Activated T-helper 2 cell treated with anti-CD3 and anti-CD28 coated beads, Interferon-gamma antibody, Interleukin-2, Interleukin-4, amounts not matched to agents 10 μg/mL and 5 μg/mL and 100 μg/mL, durations not matched to agents 14 hours and 24 hours and 36 hours (primary cell): ENCODE measurements at regions of chr12 and their contacts with region 1.

Region 1: DNA sequence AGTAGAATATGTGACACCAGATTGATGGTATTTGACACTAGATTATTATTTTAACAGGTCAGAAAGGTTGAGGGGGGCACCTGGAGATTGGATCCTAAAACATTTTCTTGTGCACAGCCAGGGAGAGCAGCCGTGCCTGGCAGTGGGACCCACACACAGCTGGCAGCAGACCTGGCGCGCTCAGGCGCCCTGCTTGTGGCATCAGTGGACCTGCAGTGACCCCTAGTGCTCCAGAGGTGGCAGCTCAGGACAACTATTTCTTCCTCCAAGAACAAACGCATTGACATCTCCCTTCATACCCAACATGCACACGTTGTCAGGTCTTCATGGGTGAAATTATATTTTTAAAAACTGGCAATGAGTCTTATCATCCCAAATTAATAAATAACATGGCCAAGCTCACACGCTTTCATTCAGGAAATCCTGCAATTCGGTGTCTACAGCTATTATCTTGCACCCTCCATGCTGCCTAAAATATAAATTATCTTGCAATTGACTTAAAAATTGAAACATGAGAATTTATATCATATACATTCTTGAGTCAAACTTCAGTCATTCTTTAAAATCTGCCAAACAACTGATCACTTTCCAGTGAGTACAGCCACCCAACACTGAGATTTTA is 7.7 kb upstream of the TMEM132D start:
- DNase-seq: no peak
- H3K4me3 Mint-ChIP-seq: no peak overlapping the region
- H3K27ac Mint-ChIP-seq: no peak overlapping the region
- H3K4me1 Mint-ChIP-seq: no peaks in the 10 kb centered on the region
- H3K27me3 Mint-ChIP-seq: no peaks in the 10 kb centered on the region

Region 2: GRCh38 chr12:128644664-128645296 is 1266.8 kb before region 1 on chr12:
- intact Hi-C with region 1: loop called (anchors 5 kb)
- DNase-seq: no peak
- H3K4me3 Mint-ChIP-seq: no peak overlapping the region
- H3K27ac Mint-ChIP-seq: no peak overlapping the region
- H3K4me1 Mint-ChIP-seq: no peaks in the 10 kb centered on the region
- H3K27me3 Mint-ChIP-seq: no peaks in the 10 kb centered on the region

Region 3: GRCh38 chr12:128783129-128783574 is 1128.4 kb before region 1 on chr12:
- intact Hi-C with region 1: loop called (anchors 10 kb)
- DNase-seq: no peak
- H3K4me3 Mint-ChIP-seq: peak overlapping the region; percentile 51
- H3K27ac Mint-ChIP-seq: peak overlapping the region; percentile 90
- H3K4me1 Mint-ChIP-seq: peaks cover 8% of the 10 kb centered on the region
- H3K27me3 Mint-ChIP-seq: no peaks in the 10 kb centered on the region

Region 4: GRCh38 chr12:128969480-128970055 is 942.0 kb before region 1 on chr12:
- intact Hi-C with region 1: loop called (anchors 2 kb)
- DNase-seq: peak; percentile 15
- H3K4me3 Mint-ChIP-seq: no peak overlapping the region
- H3K27ac Mint-ChIP-seq: no peak overlapping the region
- H3K4me1 Mint-ChIP-seq: peaks cover 8% of the 10 kb centered on the region
- H3K27me3 Mint-ChIP-seq: peaks cover 22% of the 10 kb centered on the region